H1 (cell line): ENCODE measurements at regions of chr2 and their contacts with region 1.

Region 1: GRCh38 chr2:20682167-20682920 is 15.4 kb downstream of the GDF7 start:
- DNase-seq: peak in 1 of 2 experiments; percentile 63
- H3K4me3 ChIP-seq: no peak overlapping the region
- H3K27ac ChIP-seq: no peak overlapping the region
- H3K4me1 ChIP-seq: no peaks in the 10 kb centered on the region; a peak in 1 of 7 replicates
- H3K27me3 ChIP-seq: no peaks in the 10 kb centered on the region
- CTCF ChIP-seq: peak; percentile 75 to 78 (median 77)
- EP300 ChIP-seq: no peak
- POLR2A ChIP-seq: no peak
- RAD21 ChIP-seq: peak; percentile 78 to 82

Region 2: DNA sequence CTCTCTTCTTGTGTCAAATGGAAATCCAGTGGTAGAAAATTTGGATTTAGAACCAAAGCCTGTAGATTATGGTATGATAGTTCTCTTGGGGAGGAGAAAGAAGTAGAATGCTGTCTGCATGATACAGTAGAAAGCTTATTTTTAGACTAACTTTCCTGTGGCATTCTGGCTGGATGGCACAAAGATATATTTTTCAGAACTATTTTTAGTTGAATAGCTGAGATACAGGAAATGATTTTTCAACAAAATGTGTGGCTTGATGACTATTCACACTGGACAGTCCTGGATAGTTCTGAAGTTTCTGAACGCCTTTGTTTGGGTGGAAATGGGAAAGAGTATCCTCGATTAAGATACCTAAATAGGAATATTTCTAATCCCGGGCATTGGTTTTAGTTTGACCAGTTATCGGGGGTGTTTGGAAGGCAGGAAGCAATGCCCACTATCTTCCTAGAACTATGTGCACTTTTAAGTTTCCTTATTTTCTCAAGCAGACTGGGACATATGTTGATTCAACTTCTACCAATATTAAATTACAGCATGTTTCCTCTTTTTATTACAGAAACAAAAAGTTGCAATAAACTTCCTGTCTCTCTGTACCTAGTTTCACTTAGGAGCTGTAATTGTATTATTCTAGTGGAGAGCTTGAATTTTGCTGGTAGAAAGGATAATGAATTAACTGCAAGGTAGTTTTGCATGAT is 16.7 kb after region 1 on chr2:
- CTCF ChIA-PET with region 1: interaction called, 35 read pairs
- POLR2A ChIA-PET with region 1: no interaction called
- DNase-seq: no peak
- H3K4me3 ChIP-seq: no peak overlapping the region
- H3K27ac ChIP-seq: no peak overlapping the region
- H3K4me1 ChIP-seq: no peaks in the 10 kb centered on the region
- H3K27me3 ChIP-seq: no peaks in the 10 kb centered on the region
- CTCF ChIP-seq: no peak
- EP300 ChIP-seq: no peak
- POLR2A ChIP-seq: no peak
- RAD21 ChIP-seq: no peak